ENCODE measurements at regions of chr5 and their contacts with region 1.

Region 1: DNA sequence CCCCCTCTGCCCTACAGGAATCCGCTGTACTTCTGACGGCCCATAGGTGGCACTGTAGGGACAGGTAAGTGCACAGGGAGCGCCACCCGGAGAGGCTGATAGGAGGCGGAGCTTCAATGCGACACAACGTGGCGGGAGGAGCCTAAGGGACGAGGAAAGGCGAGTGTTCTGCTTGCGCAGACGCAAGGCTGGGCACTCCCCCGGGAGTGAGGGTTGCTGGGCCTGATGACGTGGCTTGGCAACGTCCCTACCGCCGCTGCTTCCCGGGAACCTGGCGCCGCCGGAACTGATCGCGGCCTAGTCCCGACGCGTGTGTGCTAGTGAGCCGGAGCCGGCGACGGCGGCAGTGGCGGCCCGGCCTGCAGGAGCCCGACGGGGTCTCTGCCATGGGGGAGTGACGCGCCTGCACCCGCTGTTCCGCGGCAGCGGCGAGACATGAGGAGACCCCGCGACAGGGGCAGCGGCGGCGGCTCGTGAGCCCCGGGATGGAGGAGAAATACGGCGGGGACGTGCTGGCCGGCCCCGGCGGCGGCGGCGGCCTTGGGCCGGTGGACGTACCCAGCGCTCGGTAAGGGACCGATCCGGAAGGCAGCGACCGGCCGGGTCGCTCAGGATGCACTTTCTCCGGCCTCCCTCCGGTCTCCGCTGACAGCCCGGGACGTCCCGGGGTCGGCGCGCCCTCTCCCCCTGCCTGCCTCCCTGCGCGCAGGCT is at the start of gene SLC30A5:
- DNase-seq: peak; percentile 83 to 99 (median 98)
- ATAC-seq: peak; percentile 99
- H3K4me3 ChIP-seq: peak within 1 kb of the TSS; percentile 70
- H3K4me3 Mint-ChIP-seq: peak within 1 kb of the TSS; percentile 89 to 94 (median 93)
- H3K27ac ChIP-seq: peak within 1 kb of the TSS; percentile 98
- H3K27ac Mint-ChIP-seq: peak within 1 kb of the TSS; percentile 84 to 98 (median 95)
- H3K4me1 ChIP-seq: peaks cover 9 to 17% of the 10 kb centered on the region in 2 donors
- H3K4me1 Mint-ChIP-seq: peaks cover 17 to 49% (median 37%) of the 10 kb centered on the region in 7 donors
- H3K27me3 ChIP-seq: no peaks in the 10 kb centered on the region
- H3K27me3 Mint-ChIP-seq: no peaks in the 10 kb centered on the region
- total RNA-seq, gene SLC30A5: 15.9 to 46.5 (median 41.3) TPM

Region 2: GRCh38 chr5:68593191-68593675 is 500.7 kb before region 1 on chr5:
- CTCF ChIA-PET with region 1: no interaction called
- POLR2A ChIA-PET with region 1: no interaction called
- intact Hi-C with region 1: no loop called
- DNase-seq: no peak
- ATAC-seq: no peak
- H3K4me3 ChIP-seq: no peak overlapping the region
- H3K4me3 Mint-ChIP-seq: no peak overlapping the region
- H3K27ac ChIP-seq: no peak overlapping the region
- H3K27ac Mint-ChIP-seq: no peak overlapping the region
- H3K4me1 ChIP-seq: no peaks in the 10 kb centered on the region
- H3K4me1 Mint-ChIP-seq: no peaks in the 10 kb centered on the region
- H3K27me3 ChIP-seq: no peaks in the 10 kb centered on the region
- H3K27me3 Mint-ChIP-seq: peaks cover 0 to 11% (median 9%) of the 10 kb centered on the region in 5 donors

Region 3: GRCh38 chr5:69042915-69043658 is 50.8 kb before region 1 on chr5:
- CTCF ChIA-PET with region 1: interaction called, 8 read pairs
- POLR2A ChIA-PET with region 1: interaction called, 8 read pairs
- intact Hi-C with region 1: loop called (anchors 1 kb)
- DNase-seq: peak; percentile 42 to 93 (median 88)
- ATAC-seq: peak; percentile 100
- H3K4me3 ChIP-seq: peak overlapping the region; percentile 72
- H3K4me3 Mint-ChIP-seq: peak overlapping the region; percentile 74 to 93 (median 88)
- H3K27ac ChIP-seq: peak overlapping the region; percentile 74
- H3K27ac Mint-ChIP-seq: peak overlapping the region; percentile 70 to 96 (median 92)
- H3K4me1 ChIP-seq: no peaks in the 10 kb centered on the region
- H3K4me1 Mint-ChIP-seq: peaks cover 0 to 14% (median 6%) of the 10 kb centered on the region in 7 donors
- H3K27me3 ChIP-seq: no peaks in the 10 kb centered on the region
- H3K27me3 Mint-ChIP-seq: peaks cover 0 to 5% (median 0%) of the 10 kb centered on the region in 5 donors

Region 4: DNA sequence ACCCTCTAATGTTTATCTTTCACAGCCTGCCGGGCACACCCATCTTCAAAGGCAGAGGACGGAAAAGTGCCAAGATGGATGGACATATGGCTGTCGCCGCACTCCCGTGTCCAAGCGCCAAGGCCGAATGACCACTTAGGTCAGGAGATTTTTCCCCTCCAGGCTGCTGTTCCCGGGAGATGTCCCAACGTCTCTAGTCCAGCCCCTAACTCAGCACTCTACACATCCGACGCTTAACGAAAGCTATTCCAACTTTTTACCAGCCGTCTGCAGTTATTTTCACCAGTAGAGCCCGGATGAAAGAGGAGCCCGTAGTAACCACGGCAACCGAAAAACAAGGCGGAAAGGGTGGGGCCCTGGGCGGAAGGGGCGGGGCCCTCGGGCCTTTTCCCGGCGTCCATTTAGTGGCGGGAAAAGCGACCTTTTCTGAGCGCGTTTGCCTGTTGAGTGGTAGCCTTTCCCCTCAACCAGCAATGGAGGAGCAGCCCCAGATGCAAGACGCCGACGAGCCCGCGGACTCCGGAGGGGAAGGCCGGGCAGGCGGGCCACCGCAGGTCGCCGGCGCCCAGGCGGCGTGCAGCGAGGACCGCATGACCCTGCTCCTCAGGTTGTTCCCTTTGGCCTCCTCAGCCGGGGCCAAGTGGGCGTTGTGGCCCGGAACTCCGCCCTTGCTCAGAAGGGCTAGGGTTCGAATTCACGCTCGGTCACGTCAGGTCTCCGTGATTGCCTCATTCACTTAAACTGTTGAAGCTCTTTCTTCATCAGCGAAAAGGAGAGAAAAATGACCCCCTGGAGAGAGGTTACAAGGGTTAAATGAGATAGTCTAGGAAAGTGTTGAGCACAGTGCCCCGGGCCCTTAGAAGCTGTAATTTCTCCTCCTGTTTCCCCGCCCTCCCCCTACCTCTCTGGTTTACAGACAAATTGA is 95.5 kb after region 1 on chr5 and contains the start of gene CENPH:
- CTCF ChIA-PET with region 1: no interaction called
- POLR2A ChIA-PET with region 1: no interaction called
- intact Hi-C with region 1: loop called (anchors 1 kb)
- DNase-seq: peak; percentile 83 to 92 (median 90)
- ATAC-seq: peak; percentile 99
- H3K4me3 ChIP-seq: peak within 1 kb of the TSS; percentile 99
- H3K4me3 Mint-ChIP-seq: peak within 1 kb of the TSS; percentile 86 to 96 (median 92)
- H3K27ac ChIP-seq: peak within 1 kb of the TSS; percentile 75
- H3K27ac Mint-ChIP-seq: peak within 1 kb of the TSS; percentile 85 to 96 (median 92)
- H3K4me1 ChIP-seq: peaks cover 9 to 11% of the 10 kb centered on the region in 2 donors
- H3K4me1 Mint-ChIP-seq: peaks cover 0 to 19% (median 16%) of the 10 kb centered on the region in 7 donors
- H3K27me3 ChIP-seq: no peaks in the 10 kb centered on the region
- H3K27me3 Mint-ChIP-seq: no peaks in the 10 kb centered on the region
- total RNA-seq, gene CENPH: 3.4 to 25.3 (median 8.2) TPM

Region 5: GRCh38 chr5:69234457-69235268 is 140.7 kb after region 1 on chr5 and contains the start of gene CDK7:
- CTCF ChIA-PET with region 1: no interaction called
- POLR2A ChIA-PET with region 1: interaction called, 3 read pairs
- intact Hi-C with region 1: loop called (anchors 1 kb)
- DNase-seq: peak; percentile 76 to 93 (median 89)
- ATAC-seq: peak; percentile 100
- H3K4me3 ChIP-seq: peak within 1 kb of the TSS; percentile 87
- H3K4me3 Mint-ChIP-seq: peak within 1 kb of the TSS; percentile 82 to 99 (median 98)
- H3K27ac ChIP-seq: peak within 1 kb of the TSS; percentile 88
- H3K27ac Mint-ChIP-seq: peak within 1 kb of the TSS; percentile 77 to 96 (median 89)
- H3K4me1 ChIP-seq: peaks cover 10 to 16% of the 10 kb centered on the region in 2 donors
- H3K4me1 Mint-ChIP-seq: peaks cover 29 to 50% (median 39%) of the 10 kb centered on the region in 7 donors
- H3K27me3 ChIP-seq: no peaks in the 10 kb centered on the region
- H3K27me3 Mint-ChIP-seq: no peaks in the 10 kb centered on the region
- total RNA-seq, gene CDK7: 18.2 to 28.9 (median 21.8) TPM

Region 6: DNA sequence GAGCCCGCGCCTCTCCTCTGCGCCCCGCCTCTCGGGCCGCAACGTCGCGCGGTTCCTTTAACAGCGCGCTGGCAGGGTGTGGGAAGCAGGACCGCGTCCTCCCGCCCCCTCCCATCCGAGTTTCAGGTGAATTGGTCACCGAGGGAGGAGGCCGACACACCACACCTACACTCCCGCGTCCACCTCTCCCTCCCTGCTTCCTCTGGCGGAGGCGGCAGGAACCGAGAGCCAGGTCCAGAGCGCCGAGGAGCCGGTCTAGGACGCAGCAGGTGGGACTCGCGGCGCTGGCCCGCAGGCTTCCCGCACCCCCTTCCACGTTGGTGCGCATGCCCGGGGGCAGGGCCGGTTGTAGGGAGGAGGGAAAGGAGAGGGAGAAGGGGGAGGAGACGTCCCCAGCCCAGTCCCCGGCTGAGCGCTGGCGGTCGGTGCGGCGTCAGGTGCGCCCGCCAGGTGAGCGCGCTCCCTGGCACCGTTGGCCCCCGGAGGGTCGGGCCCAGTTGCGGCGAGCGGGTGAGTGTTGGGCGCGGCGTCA is 398.5 kb after region 1 on chr5 and contains the start of gene OCLN:
- CTCF ChIA-PET with region 1: no interaction called
- POLR2A ChIA-PET with region 1: no interaction called
- intact Hi-C with region 1: loop called in 1 of 2 experiments (anchors 2 kb)
- DNase-seq: peak in 3 of 9 donors; percentile 1 to 39 (median 11)
- ATAC-seq: peak; percentile 36
- H3K4me3 ChIP-seq: peak within 1 kb of the TSS; percentile 29
- H3K4me3 Mint-ChIP-seq: peak within 1 kb of the TSS; percentile 41 to 81 (median 76)
- H3K27ac ChIP-seq: no peak within 1 kb of the TSS
- H3K27ac Mint-ChIP-seq: no peak within 1 kb of the TSS
- H3K4me1 ChIP-seq: no peaks in the 10 kb centered on the region
- H3K4me1 Mint-ChIP-seq: peaks cover 0 to 13% (median 8%) of the 10 kb centered on the region in 7 donors
- H3K27me3 ChIP-seq: peaks cover 0 to 5% of the 10 kb centered on the region in 2 donors
- H3K27me3 Mint-ChIP-seq: peaks cover 26 to 72% (median 49%) of the 10 kb centered on the region in 5 donors
- total RNA-seq, gene OCLN: 0.44 to 8.5 (median 6.2) TPM